GM12878 (cell line): ENCODE measurements at regions of chr17 and their contacts with region 1.

Region 1: DNA sequence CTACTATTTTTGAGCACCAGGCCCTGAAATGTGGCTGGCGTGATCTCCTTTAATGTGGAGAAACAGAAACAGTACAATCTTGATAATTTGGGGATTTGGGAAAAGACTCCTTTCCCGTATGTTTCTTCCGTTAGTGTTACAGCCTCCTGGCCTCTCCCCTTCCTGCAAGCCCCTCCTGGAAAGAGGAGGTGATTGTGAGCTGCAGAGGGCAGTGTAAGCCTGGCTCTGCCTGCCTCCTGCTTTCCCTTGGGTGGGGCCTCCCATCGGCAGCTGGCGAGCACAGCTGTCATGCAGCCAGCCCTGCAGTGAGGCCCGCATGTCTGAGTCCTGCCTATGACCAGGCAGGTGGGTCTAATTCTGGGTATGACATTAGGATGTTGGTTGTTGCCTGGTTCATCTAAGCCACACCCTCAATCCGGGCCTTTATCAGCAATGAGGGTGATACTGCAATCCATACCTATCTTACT is 48.7 kb upstream of the WSB1 start:
- DNase-seq: peak; percentile 51
- ATAC-seq: peak; percentile 94
- H3K4me3 ChIP-seq: no peak overlapping the region
- H3K27ac ChIP-seq: no peak overlapping the region
- H3K4me1 ChIP-seq: peaks cover 28% of the 10 kb centered on the region
- H3K27me3 ChIP-seq: no peaks in the 10 kb centered on the region
- CTCF ChIP-seq: peak; percentile 70 to 96 (median 74); a peak in 5 of 6 replicates
- EP300 ChIP-seq: no peak
- POLR2A ChIP-seq: no peak
- RAD21 ChIP-seq: peak; percentile 93

Region 2: DNA sequence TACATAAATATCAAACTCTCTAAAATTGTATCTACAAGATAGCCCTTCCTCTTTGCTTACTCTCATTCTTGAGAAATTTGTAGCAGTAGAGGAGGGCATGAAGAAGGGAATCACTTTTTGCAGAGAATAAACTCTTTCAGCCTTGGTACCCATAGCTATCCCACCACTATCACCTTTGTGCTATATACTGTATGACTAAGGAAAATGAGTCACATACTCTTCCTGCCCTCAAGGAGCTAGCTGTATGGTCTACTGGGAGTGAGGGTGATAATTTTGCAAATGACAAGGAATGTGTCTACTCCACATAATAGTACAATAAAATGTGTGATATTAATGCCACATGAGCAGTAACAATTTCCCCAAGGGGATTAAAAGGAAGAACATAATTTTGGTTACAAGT is 135.9 kb before region 1 on chr17:
- CTCF ChIA-PET with region 1: no interaction called
- POLR2A ChIA-PET with region 1: no interaction called
- RAD21 ChIA-PET with region 1: no interaction called
- SMC1A ChIA-PET with region 1: no interaction called
- in situ Hi-C with region 1: no loop called
- intact Hi-C with region 1: no loop called
- DNase-seq: no peak
- ATAC-seq: no peak
- H3K4me3 ChIP-seq: no peak overlapping the region
- H3K27ac ChIP-seq: no peak overlapping the region
- H3K4me1 ChIP-seq: no peaks in the 10 kb centered on the region
- H3K27me3 ChIP-seq: no peaks in the 10 kb centered on the region
- CTCF ChIP-seq: no peak
- EP300 ChIP-seq: no peak
- POLR2A ChIP-seq: no peak
- RAD21 ChIP-seq: no peak

Region 3: GRCh38 chr17:27259356-27259755 is 14.1 kb after region 1 on chr17:
- CTCF ChIA-PET with region 1: interaction called, 11 read pairs
- POLR2A ChIA-PET with region 1: no interaction called
- RAD21 ChIA-PET with region 1: interaction called, 3 read pairs
- SMC1A ChIA-PET with region 1: no interaction called
- in situ Hi-C with region 1: no loop called
- intact Hi-C with region 1: no loop called
- DNase-seq: no peak
- ATAC-seq: no peak
- H3K4me3 ChIP-seq: no peak overlapping the region
- H3K27ac ChIP-seq: no peak overlapping the region
- H3K4me1 ChIP-seq: no peaks in the 10 kb centered on the region
- H3K27me3 ChIP-seq: no peaks in the 10 kb centered on the region; a peak in 1 of 4 replicates
- CTCF ChIP-seq: no peak
- EP300 ChIP-seq: no peak
- POLR2A ChIP-seq: no peak
- RAD21 ChIP-seq: no peak

Region 4: DNA sequence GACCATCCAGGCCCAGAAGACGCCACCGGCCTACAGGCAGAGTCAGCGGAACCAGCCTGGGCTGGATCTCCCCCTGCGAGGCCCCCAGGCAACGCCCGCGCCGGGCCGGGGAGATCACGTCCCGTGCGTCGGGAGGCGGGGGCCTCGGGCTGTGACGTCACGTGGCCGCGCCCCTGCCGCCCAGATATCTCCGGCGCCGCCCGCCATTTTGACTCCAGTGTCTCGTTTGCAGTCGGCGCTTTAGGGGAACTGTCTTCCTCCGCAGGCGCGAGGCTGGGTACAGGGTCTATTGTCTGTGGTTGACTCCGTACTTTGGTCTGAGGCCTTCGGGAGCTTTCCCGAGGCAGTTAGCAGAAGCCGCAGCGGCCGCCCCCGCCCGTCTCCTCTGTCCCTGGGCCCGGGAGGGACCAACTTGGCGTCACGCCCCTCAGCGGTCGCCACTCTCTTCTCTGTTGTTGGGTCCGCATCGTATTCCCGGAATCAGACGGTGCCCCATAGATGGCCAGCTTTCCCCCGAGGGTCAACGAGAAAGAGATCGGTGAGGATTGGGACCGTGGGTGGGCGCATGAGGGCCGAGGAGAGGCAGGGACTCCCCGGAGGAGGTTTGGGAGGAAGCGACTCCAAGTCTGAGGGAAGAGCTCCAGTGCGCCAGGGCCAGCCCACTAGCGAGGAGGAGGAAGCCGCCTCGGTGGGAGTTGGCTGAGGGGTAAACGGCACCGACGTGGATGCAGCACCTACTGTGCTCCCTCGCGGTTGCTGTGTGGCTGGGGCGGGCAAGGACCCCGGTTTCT is 48.8 kb after region 1 on chr17 and contains the start of gene WSB1:
- CTCF ChIA-PET with region 1: interaction called, 80 read pairs
- POLR2A ChIA-PET with region 1: interaction called, 6 read pairs
- RAD21 ChIA-PET with region 1: interaction called, 12 read pairs
- SMC1A ChIA-PET with region 1: interaction called, 4 read pairs
- in situ Hi-C with region 1: no loop called
- intact Hi-C with region 1: loop called (anchors 2 kb)
- DNase-seq: peak; percentile 61
- ATAC-seq: peak; percentile 83
- H3K4me3 ChIP-seq: peak within 1 kb of the TSS; percentile 86
- H3K27ac ChIP-seq: peak within 1 kb of the TSS; percentile 97
- H3K4me1 ChIP-seq: peaks cover 11% of the 10 kb centered on the region
- H3K27me3 ChIP-seq: no peaks in the 10 kb centered on the region
- CTCF ChIP-seq: no peak
- EP300 ChIP-seq: peak; percentile 20 to 57; a peak in 2 of 4 replicates
- POLR2A ChIP-seq: peak; percentile 100
- RAD21 ChIP-seq: no peak
- polyA plus RNA-seq, gene WSB1: 26.6 to 49.8 TPM

Region 5: DNA sequence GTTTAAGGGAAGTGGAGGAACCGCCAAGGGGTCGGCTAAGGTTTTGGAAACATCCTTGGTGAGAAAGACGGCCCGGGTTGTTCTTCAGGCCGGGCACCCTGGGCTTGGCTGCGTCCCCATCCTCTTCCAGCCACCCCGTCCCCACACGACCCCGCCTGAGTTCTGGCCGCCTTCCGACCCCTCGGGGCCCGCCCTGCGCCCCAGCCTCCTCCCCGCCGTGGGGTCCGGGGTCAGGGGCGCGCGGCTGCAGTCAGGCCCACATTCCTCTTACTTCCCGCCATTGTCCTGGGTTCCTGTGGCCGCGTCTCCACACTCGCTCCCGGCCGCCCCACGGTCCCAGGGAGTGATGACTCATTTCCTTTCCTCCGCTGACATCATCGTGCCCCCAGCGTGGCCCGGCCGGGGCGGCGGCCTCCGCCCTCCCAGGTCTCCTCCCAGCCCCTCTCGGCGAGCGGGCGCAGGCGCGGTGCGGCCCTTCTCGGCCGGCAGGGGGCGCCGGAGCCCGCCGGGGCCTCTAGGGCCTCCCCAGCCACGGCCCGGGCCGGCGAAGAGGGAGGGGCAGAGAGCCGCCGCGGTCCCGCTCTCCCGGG is 108.3 kb after region 1 on chr17:
- CTCF ChIA-PET with region 1: interaction called, 106 read pairs
- POLR2A ChIA-PET with region 1: no interaction called
- RAD21 ChIA-PET with region 1: interaction called, 9 read pairs
- SMC1A ChIA-PET with region 1: interaction called, 6 read pairs
- in situ Hi-C with region 1: no loop called
- intact Hi-C with region 1: loop called (anchors 2 kb)
- DNase-seq: peak; percentile 42
- ATAC-seq: peak; percentile 94
- H3K4me3 ChIP-seq: peak overlapping the region; percentile 73
- H3K27ac ChIP-seq: peak overlapping the region; percentile 70
- H3K4me1 ChIP-seq: peaks cover 7% of the 10 kb centered on the region
- H3K27me3 ChIP-seq: no peaks in the 10 kb centered on the region
- CTCF ChIP-seq: peak; percentile 63 to 93 (median 89); a peak in 4 of 6 replicates
- EP300 ChIP-seq: peak in 1 of 2 experiments; percentile 39; a peak in 2 of 4 replicates
- POLR2A ChIP-seq: peak; percentile 85
- RAD21 ChIP-seq: peak; percentile 73

Region 6: GRCh38 chr17:27654654-27655524 is 409.6 kb after region 1 on chr17:
- CTCF ChIA-PET with region 1: interaction called, 4 read pairs
- POLR2A ChIA-PET with region 1: no interaction called
- RAD21 ChIA-PET with region 1: interaction called, 3 read pairs
- SMC1A ChIA-PET with region 1: no interaction called
- in situ Hi-C with region 1: loop called (anchors 5 kb)
- intact Hi-C with region 1: loop called (anchors 5 kb)
- DNase-seq: peak; percentile 25
- ATAC-seq: peak; percentile 98
- H3K4me3 ChIP-seq: no peak overlapping the region
- H3K27ac ChIP-seq: no peak overlapping the region
- H3K4me1 ChIP-seq: no peaks in the 10 kb centered on the region
- H3K27me3 ChIP-seq: no peaks in the 10 kb centered on the region
- CTCF ChIP-seq: peak; percentile 67 to 90 (median 81)
- EP300 ChIP-seq: no peak
- POLR2A ChIP-seq: no peak
- RAD21 ChIP-seq: peak; percentile 57

Region 7: GRCh38 chr17:27776882-27777624 is 531.8 kb after region 1 on chr17:
- CTCF ChIA-PET with region 1: no interaction called
- POLR2A ChIA-PET with region 1: no interaction called
- RAD21 ChIA-PET with region 1: no interaction called
- SMC1A ChIA-PET with region 1: no interaction called
- in situ Hi-C with region 1: no loop called
- intact Hi-C with region 1: no loop called
- DNase-seq: no peak
- ATAC-seq: no peak
- H3K4me3 ChIP-seq: no peak overlapping the region
- H3K27ac ChIP-seq: no peak overlapping the region
- H3K4me1 ChIP-seq: no peaks in the 10 kb centered on the region
- H3K27me3 ChIP-seq: no peaks in the 10 kb centered on the region; a peak in 2 of 4 replicates
- CTCF ChIP-seq: no peak
- EP300 ChIP-seq: no peak
- POLR2A ChIP-seq: no peak
- RAD21 ChIP-seq: no peak